ENCODE measurements at regions of chr2 and their contacts with region 1.

Region 1: GRCh38 chr2:183341057-183341456 is 216.8 kb downstream of the NUP35 start:
- DNase-seq: no peak
- H3K4me3 ChIP-seq: no peak overlapping the region
- H3K27ac ChIP-seq: no peak overlapping the region
- H3K4me1 ChIP-seq: no peaks in the 10 kb centered on the region
- H3K27me3 ChIP-seq: no peaks in the 10 kb centered on the region
- CTCF ChIP-seq: no peak
- EP300 ChIP-seq: no peak
- POLR2A ChIP-seq: no peak

Region 2: DNA sequence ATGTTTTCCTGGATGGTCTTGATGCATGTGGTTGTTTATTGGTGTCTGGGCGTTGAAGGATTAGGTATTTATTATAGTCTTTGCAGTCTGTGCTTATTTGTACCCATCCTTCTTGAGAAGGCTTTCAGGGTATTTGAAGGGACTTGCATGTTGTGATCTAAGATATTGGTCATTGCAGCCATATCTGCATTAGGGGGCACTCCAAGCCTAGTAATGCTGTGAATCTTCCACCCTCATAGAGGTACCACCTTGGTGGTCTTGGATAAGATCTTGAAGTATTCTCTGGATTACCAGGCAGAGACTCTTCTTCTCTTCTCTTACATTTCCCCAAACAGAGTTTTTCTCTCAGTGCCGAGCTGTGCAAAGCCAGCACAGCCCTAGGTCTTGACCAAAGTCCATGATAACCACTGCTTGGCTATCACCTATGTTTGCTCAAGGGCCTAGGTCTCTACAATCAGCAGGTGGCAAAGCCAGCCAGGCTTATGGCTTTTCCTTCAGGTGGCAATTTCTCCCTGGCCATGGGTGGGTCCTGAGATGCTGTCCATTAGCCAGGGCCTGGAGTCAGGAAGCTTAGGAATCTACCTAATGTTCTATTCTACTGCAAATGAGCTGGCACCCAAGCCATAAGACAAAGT is 1370.8 kb before region 1 on chr2:
- in situ Hi-C with region 1: no loop called
- intact Hi-C with region 1: loop called (anchors 5 kb)
- DNase-seq: no peak
- H3K4me3 ChIP-seq: no peak overlapping the region
- H3K27ac ChIP-seq: no peak overlapping the region
- H3K4me1 ChIP-seq: peaks cover 0 to 10% (median 0%) of the 10 kb centered on the region in 4 donors
- H3K27me3 ChIP-seq: no peaks in the 10 kb centered on the region
- CTCF ChIP-seq: no peak
- EP300 ChIP-seq: no peak
- POLR2A ChIP-seq: no peak

Region 3: DNA sequence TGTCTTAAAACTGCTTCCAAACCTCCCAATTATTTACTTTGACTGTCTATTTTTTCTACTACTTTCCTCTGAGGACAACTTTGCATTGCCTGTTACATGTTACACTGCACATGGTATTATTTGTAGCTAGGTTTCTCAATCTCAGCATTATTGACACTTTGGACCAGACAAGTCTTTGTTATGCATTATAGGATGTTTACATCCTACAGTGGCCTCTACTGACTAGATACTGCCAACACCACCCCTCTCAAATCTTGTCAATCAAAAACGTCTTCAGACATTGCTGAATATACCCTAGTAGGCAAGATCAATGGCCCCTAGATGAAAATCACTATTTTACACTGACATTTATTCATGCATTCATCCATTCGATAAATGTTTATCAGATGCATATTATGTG is 754.6 kb before region 1 on chr2:
- in situ Hi-C with region 1: no loop called
- intact Hi-C with region 1: no loop called
- DNase-seq: no peak
- H3K4me3 ChIP-seq: no peak overlapping the region
- H3K27ac ChIP-seq: no peak overlapping the region
- H3K4me1 ChIP-seq: no peaks in the 10 kb centered on the region
- H3K27me3 ChIP-seq: no peaks in the 10 kb centered on the region
- CTCF ChIP-seq: no peak
- EP300 ChIP-seq: no peak
- POLR2A ChIP-seq: no peak

Region 4: GRCh38 chr2:183193904-183194303 is 147.2 kb before region 1 on chr2:
- in situ Hi-C with region 1: no loop called
- intact Hi-C with region 1: no loop called
- DNase-seq: no peak
- H3K4me3 ChIP-seq: no peak overlapping the region
- H3K27ac ChIP-seq: no peak overlapping the region
- H3K4me1 ChIP-seq: no peaks in the 10 kb centered on the region
- H3K27me3 ChIP-seq: no peaks in the 10 kb centered on the region
- CTCF ChIP-seq: no peak
- EP300 ChIP-seq: no peak
- POLR2A ChIP-seq: no peak

Region 5: GRCh38 chr2:183359867-183360266 is 18.8 kb after region 1 on chr2:
- in situ Hi-C with region 1: no loop called
- intact Hi-C with region 1: no loop called
- DNase-seq: no peak
- H3K4me3 ChIP-seq: no peak overlapping the region
- H3K27ac ChIP-seq: no peak overlapping the region
- H3K4me1 ChIP-seq: no peaks in the 10 kb centered on the region
- H3K27me3 ChIP-seq: no peaks in the 10 kb centered on the region
- CTCF ChIP-seq: no peak
- EP300 ChIP-seq: no peak
- POLR2A ChIP-seq: no peak

Region 6: DNA sequence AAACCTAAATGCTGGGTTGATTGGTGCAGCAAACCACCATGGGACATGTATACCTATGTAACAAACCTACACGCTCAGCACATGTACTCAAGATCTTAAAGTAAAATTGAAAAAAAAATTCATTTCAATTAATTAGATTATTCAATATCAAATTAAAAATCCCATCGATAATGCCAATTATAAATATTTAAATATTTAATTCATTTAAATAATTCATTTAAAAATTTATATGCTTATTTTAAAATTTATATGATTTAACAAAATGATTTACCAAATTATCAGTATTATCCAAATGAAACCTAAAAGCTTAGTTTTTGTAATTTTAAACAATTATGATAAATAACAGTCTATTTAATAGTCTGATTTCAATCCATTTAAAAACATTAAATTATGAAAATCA is 343.6 kb after region 1 on chr2:
- in situ Hi-C with region 1: no loop called
- intact Hi-C with region 1: no loop called
- DNase-seq: no peak
- H3K4me3 ChIP-seq: no peak overlapping the region
- H3K27ac ChIP-seq: no peak overlapping the region
- H3K4me1 ChIP-seq: no peaks in the 10 kb centered on the region
- H3K27me3 ChIP-seq: no peaks in the 10 kb centered on the region
- CTCF ChIP-seq: no peak
- EP300 ChIP-seq: no peak
- POLR2A ChIP-seq: no peak

Measured in transverse colon (tissue), 4 donors.